ENCODE measurements at regions of chr12 and their contacts with region 1.

Region 1: GRCh38 chr12:102010265-102010994 is 51.4 kb downstream of the WASHC3 start:
- DNase-seq: peak; percentile 63
- CTCF ChIP-seq: no peak

Region 2: DNA sequence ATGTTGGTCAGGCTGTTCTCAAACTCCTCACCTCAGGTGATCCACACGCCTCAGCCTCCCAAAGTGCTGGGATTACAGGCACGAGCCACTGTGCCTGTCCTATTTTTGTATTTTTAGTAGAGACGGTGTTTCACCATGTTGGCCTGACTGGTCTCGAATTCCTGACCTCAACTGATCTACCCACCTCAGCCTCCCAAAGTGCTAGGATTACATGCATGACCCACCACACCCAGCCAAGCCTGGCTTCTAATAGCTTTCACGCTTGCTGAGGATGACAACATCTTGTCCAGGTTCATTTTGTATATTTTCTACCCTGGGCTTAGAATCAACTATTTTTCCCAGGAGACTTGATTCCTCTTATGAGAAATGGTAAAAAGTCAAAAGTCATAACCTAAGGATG is 13.3 kb before region 1 on chr12:
- CTCF ChIA-PET with region 1: interaction called, 14 read pairs
- POLR2A ChIA-PET with region 1: no interaction called
- DNase-seq: no peak
- CTCF ChIP-seq: no peak